ENCODE measurements at regions of chr12 and their contacts with region 1.

Region 1: DNA sequence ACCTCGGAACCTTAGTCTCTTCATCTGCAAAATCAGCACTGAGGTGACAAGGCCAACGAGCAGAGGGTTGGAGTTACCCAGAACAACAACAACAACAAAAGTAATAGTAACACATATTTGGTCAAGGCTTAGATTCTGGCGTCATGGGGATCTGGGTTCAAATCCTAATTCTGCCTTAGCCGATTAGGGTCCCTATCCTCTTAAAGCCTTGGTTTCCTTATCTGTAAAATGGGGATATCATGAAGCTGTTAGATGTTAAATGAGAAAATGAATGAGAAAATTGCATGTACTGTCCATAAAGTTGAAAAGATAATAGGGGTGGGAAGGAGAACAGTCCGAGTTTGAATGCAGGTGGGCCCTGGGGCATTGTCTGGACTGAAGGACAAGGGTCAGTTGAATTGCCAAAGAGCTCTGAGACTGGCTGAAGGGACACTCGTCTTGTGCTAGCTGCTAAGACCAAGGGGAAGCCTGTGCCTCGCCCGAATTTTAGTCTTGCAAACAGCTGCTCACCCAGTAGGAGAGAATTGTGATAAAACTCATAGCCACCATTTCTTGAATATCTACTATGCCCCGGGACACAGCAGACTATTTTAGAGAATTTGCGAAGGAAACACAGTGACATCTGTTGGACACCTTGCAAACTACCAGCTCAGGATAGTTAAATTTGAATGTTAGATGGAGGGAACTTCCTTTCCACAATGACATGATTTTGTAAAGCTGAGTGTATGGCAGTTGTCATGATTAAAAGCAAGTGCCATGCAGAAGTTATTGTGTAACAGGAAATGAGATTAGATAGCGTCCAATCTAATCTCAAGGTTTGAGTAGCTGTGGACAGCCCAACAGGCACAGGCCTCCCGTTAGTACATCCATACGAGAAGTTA is 6.8 kb upstream of the HNF1A start:
- DNase-seq: no peak
- H3K4me3 ChIP-seq: no peak overlapping the region
- H3K27ac ChIP-seq: no peak overlapping the region
- H3K4me1 ChIP-seq: peaks cover 0 to 3% (median under 1%) of the 10 kb centered on the region in 4 experiments; a peak in 3 of 7 replicates
- H3K27me3 ChIP-seq: no peaks in the 10 kb centered on the region
- CTCF ChIP-seq: peak in 2 of 3 experiments; percentile 61 to 81; a peak in 3 of 4 replicates
- EP300 ChIP-seq: no peak
- POLR2A ChIP-seq: no peak
- RAD21 ChIP-seq: peak; percentile 84 to 89

Region 2: GRCh38 chr12:120737557-120738251 is 233.8 kb before region 1 on chr12:
- CTCF ChIA-PET with region 1: interaction called, 34 read pairs
- POLR2A ChIA-PET with region 1: no interaction called
- DNase-seq: peak in 1 of 2 experiments; percentile 68
- H3K4me3 ChIP-seq: no peak overlapping the region
- H3K27ac ChIP-seq: no peak overlapping the region
- H3K4me1 ChIP-seq: no peaks in the 10 kb centered on the region
- H3K27me3 ChIP-seq: no peaks in the 10 kb centered on the region
- CTCF ChIP-seq: peak; percentile 53 to 70 (median 61)
- EP300 ChIP-seq: no peak
- POLR2A ChIP-seq: no peak
- RAD21 ChIP-seq: peak; percentile 74 to 82

Region 3: GRCh38 chr12:120764816-120765215 is 206.7 kb before region 1 on chr12:
- CTCF ChIA-PET with region 1: interaction called, 10 read pairs
- POLR2A ChIA-PET with region 1: no interaction called
- DNase-seq: no peak
- H3K4me3 ChIP-seq: no peak overlapping the region
- H3K27ac ChIP-seq: no peak overlapping the region
- H3K4me1 ChIP-seq: peaks cover 0 to 3% (median under 1%) of the 10 kb centered on the region in 4 experiments; a peak in 3 of 7 replicates
- H3K27me3 ChIP-seq: no peaks in the 10 kb centered on the region
- CTCF ChIP-seq: no peak
- EP300 ChIP-seq: no peak
- POLR2A ChIP-seq: no peak
- RAD21 ChIP-seq: no peak

Region 4: DNA sequence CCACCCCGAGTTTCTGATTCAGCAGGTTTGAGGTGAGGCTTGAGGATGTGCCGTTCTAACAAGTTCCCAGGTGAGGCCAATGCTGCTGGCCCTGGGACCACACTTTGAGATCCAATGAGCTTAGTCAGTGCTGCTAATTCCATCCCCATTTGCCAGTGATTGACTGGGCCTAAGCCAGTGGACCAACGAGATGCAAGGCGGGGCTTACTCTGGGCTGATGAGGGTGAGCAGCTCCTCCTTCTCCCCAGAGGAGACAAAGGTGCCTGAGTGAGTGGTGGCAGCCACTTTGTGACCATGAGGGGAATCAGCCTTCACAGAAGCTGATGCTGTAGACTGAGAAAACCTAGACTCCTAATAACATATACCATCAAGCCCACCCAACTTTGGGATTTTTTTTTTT is 16.3 kb before region 1 on chr12:
- CTCF ChIA-PET with region 1: interaction called, 24 read pairs
- POLR2A ChIA-PET with region 1: interaction called, 3 read pairs
- DNase-seq: no peak
- H3K4me3 ChIP-seq: no peak overlapping the region
- H3K27ac ChIP-seq: no peak overlapping the region
- H3K4me1 ChIP-seq: no peaks in the 10 kb centered on the region
- H3K27me3 ChIP-seq: no peaks in the 10 kb centered on the region
- CTCF ChIP-seq: no peak
- EP300 ChIP-seq: no peak
- POLR2A ChIP-seq: no peak
- RAD21 ChIP-seq: no peak

Region 5: GRCh38 chr12:120960657-120961056 is 10.9 kb before region 1 on chr12:
- CTCF ChIA-PET with region 1: interaction called, 24 read pairs
- POLR2A ChIA-PET with region 1: interaction called, 3 read pairs
- DNase-seq: no peak
- H3K4me3 ChIP-seq: no peak overlapping the region
- H3K27ac ChIP-seq: no peak overlapping the region
- H3K4me1 ChIP-seq: peaks cover 0 to under 1% (median 0%) of the 10 kb centered on the region in 4 experiments; a peak in 1 of 7 replicates
- H3K27me3 ChIP-seq: no peaks in the 10 kb centered on the region
- CTCF ChIP-seq: no peak
- EP300 ChIP-seq: no peak
- POLR2A ChIP-seq: no peak
- RAD21 ChIP-seq: no peak